ENCODE measurements at regions of chr3 and their contacts with region 1.

Region 1: DNA sequence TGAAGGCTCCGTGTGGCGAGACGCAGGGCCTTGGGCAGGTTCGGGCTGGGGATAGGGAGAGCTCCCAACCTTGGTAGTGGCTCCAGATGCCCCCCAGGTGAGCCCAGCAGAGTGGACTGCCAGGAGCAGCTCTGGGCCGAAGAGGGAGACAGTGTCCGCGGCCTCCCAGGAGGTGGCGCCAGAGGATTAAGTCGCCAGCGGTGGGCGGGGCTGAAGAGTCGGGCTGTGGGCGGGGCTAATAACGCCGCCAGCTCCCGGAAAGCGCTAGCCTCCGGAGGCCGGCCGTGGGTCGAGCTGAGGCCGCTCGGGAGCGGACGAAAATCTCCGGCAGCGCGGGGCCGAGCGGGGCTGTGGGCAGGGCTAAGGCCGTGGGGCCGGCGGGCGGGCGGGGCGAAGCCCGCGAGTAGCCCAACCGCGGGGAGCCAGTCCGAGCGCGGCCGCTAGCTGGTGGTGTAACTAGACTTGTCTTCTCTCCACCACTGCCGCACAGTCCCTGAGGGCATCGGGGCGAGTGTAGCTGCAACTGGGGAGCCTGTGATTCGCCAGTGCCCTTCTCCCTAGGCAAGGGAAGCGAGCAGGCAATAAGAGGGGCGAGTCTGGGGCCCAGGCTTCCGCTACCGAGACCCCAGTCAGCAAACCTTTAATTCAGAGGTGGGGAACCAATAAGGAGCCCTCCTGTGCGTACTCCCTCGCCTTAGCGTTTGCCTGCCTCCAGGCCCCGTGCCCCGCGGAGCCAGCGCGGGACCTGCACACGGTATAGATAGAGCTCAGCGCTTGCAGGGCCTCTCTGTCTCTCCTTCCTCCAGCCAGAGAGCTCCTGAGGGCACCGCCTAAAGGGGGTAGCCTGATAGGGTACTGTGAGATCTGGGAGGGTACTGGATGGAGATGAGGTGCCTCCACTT is 14.4 kb upstream of the BSN start:
- DNase-seq: peak; percentile 97
- H3K4me3 ChIP-seq: peak overlapping the region; percentile 25 to 55 (median 53)
- H3K27ac ChIP-seq: peak overlapping the region; percentile 85 to 88 (median 86)
- H3K4me1 ChIP-seq: peaks cover 0 to 20% (median 16%) of the 10 kb centered on the region in 4 donors
- H3K27me3 ChIP-seq: no peaks in the 10 kb centered on the region
- CTCF ChIP-seq: peak; percentile 88 to 93 (median 92)
- EP300 ChIP-seq: no peak
- POLR2A ChIP-seq: peak in 1 of 2 donors; percentile 10

Region 2: DNA sequence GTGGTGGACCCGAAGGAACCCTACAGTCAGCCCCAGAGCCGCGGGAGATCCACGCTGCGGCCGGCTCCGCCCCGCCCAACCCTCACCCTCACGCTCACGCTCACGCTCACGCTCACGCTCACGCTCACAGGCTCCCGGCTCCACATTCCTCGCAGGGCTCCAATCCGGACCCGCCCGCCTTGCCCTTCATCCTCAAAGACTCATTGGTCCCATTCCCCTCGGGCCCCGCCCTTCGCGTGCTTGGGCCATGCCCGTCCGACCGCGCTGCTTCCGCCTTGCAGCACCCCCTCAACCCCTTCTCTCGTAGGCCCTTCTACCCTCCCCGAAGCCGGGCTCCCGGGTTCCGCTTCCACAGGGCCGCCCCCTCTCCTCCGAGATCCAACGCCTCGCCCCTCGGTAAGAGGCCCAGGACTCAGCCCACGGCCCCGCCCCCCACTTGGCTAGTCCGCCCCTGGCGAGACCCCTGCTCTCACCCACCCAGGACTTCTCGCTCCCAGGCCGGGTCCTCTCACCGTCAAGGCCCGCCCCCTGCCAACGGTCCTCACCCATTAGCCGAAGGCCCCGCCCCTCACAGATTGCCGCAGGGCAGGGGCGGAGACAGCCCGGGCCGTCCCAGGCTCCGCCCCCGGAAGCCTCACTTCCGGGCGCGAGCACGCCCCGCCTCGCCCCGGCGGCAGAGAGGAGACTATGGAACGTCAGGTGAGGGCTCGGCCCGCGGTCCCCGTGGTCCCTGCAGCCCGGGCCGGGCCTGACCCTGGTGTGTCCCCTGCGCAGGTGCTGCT is 134.0 kb after region 1 on chr3 and contains the start of gene APEH:
- intact Hi-C with region 1: loop called (anchors 1 kb)
- DNase-seq: peak; percentile 98
- H3K4me3 ChIP-seq: peak within 1 kb of the TSS; percentile 83 to 94 (median 90)
- H3K27ac ChIP-seq: peak within 1 kb of the TSS; percentile 87 to 95 (median 88)
- H3K4me1 ChIP-seq: peaks cover 0 to 21% (median 20%) of the 10 kb centered on the region in 4 donors
- H3K27me3 ChIP-seq: peaks cover 0 to 4% (median 1%) of the 10 kb centered on the region in 3 donors
- CTCF ChIP-seq: no peak
- EP300 ChIP-seq: no peak
- POLR2A ChIP-seq: peak; percentile 43 to 76
- total RNA-seq, gene APEH: 49.0 to 64.8 (median 57.7) TPM

Measured in sigmoid colon (tissue), 7 donors.